Activated T-helper 2 cell treated with anti-CD3 and anti-CD28 coated beads, Interferon-gamma antibody, Interleukin-2, Interleukin-4, amounts not matched to agents 10 μg/mL and 5 μg/mL and 100 μg/mL, durations not matched to agents 14 hours and 24 hours and 36 hours (primary cell): ENCODE measurements at regions of chr3 and their contacts with region 1.

Region 1: GRCh38 chr3:41198950-41199865 is at the start of gene CTNNB1:
- DNase-seq: peak; percentile 89
- H3K4me3 Mint-ChIP-seq: peak within 1 kb of the TSS; percentile 99
- H3K27ac Mint-ChIP-seq: peak within 1 kb of the TSS; percentile 98
- H3K4me1 Mint-ChIP-seq: peaks cover 35% of the 10 kb centered on the region
- H3K27me3 Mint-ChIP-seq: peaks cover 22% of the 10 kb centered on the region
- total RNA-seq, gene CTNNB1: 230 and 238 TPM in 2 replicates

Region 2: GRCh38 chr3:40580494-40581091 is 618.6 kb before region 1 on chr3:
- intact Hi-C with region 1: loop called (anchors 2 kb)
- DNase-seq: peak; percentile 42
- H3K4me3 Mint-ChIP-seq: no peak overlapping the region
- H3K27ac Mint-ChIP-seq: no peak overlapping the region
- H3K4me1 Mint-ChIP-seq: peaks cover 3% of the 10 kb centered on the region
- H3K27me3 Mint-ChIP-seq: peaks cover 11% of the 10 kb centered on the region

Region 3: DNA sequence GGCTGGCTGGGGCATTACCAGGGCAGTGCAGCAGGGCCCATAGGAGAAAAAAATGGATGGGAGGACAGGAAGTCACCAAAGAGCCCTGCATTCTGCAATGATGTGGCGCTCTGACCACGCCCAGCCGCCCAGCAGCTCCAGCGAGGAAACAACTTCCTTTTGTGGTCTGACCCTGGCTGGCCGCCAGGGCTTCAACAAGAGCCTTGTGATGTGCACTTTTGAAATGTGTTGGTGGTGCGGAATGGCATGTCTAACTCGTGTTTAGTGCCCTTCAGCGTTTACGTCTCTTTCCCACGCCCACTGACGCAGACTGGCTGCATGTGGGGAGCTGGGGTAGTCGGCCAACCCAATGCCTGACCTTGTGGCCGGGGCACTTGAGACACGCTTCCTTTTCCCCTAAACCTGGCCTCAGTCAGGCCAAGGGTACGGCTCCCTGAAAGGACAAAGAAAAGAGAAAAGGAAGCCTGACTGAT is 81.8 kb before region 1 on chr3:
- intact Hi-C with region 1: loop called (anchors 1 kb)
- DNase-seq: peak; percentile 76
- H3K4me3 Mint-ChIP-seq: no peak overlapping the region
- H3K27ac Mint-ChIP-seq: peak overlapping the region; percentile 83
- H3K4me1 Mint-ChIP-seq: peaks cover 21% of the 10 kb centered on the region
- H3K27me3 Mint-ChIP-seq: no peaks in the 10 kb centered on the region

Region 4: GRCh38 chr3:41188268-41188667 is 10.9 kb before region 1 on chr3:
- intact Hi-C with region 1: loop called (anchors 1 kb)
- DNase-seq: peak; percentile 13
- H3K4me3 Mint-ChIP-seq: no peak overlapping the region
- H3K27ac Mint-ChIP-seq: peak overlapping the region; percentile 78
- H3K4me1 Mint-ChIP-seq: peaks cover 33% of the 10 kb centered on the region
- H3K27me3 Mint-ChIP-seq: peaks cover 12% of the 10 kb centered on the region